MCF 10A (cell line): ENCODE measurements at regions of chr7 and their contacts with region 1.

Region 1: DNA sequence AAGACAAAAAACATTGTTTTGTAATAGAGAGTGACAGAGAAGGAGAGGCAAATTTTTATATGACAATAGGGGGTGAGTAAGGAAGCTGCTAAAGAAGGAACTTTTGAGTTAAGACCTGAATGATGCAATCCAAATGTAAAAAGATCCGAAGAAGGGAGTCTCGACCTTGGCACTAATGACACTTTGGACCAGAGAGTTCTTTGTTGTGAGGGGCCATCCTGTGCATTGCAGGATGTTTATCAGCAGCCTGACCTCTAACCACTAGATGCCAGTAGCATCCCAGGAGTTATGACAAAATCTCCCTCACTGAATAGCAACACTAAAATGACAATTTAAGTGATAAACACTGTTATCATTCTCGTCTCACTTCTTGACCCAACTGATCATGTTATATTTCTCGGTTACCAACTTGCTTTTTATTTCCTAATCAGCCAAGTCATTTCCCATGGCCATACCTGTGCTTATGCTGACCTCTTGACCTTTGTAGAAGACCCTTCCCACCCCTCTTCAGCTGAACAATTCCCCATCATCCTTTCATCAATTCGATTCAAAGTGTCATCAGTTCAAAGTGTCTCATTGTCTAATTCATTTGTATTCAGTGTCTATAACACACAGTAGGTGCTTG is 30.0 kb downstream of the DGKI start:
- DNase-seq: peak; percentile 17
- H3K4me3 Mint-ChIP-seq: no peak overlapping the region
- H3K27ac Mint-ChIP-seq: no peak overlapping the region
- H3K4me1 Mint-ChIP-seq: no peaks in the 10 kb centered on the region
- H3K27me3 Mint-ChIP-seq: no peaks in the 10 kb centered on the region
- CTCF ChIP-seq: no peak

Region 2: DNA sequence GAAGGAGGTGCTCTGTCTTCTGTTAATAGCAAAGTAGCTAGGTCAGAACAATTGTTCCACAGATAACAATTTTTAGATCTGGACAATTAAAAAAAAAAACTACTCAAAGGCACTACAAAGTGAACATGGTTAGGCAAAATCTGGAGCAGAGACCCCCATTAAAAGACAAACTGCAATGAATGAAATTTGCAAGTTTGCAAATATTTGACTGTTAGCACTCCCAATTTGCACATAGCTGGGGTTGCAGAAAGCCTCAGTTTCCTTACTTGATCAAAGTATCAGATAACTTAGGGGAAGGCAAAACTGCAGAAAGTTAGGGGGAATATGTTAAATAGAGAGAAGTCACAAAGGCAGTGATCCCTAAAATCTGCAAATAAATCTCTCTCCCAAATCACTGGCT is 38.3 kb before region 1 on chr7:
- CTCF ChIA-PET with region 1: no interaction called
- POLR2A ChIA-PET with region 1: no interaction called
- intact Hi-C with region 1: no loop called
- DNase-seq: no peak
- H3K4me3 Mint-ChIP-seq: no peak overlapping the region
- H3K27ac Mint-ChIP-seq: no peak overlapping the region
- H3K4me1 Mint-ChIP-seq: peaks cover 10% of the 10 kb centered on the region
- H3K27me3 Mint-ChIP-seq: no peaks in the 10 kb centered on the region
- CTCF ChIP-seq: no peak

Region 3: DNA sequence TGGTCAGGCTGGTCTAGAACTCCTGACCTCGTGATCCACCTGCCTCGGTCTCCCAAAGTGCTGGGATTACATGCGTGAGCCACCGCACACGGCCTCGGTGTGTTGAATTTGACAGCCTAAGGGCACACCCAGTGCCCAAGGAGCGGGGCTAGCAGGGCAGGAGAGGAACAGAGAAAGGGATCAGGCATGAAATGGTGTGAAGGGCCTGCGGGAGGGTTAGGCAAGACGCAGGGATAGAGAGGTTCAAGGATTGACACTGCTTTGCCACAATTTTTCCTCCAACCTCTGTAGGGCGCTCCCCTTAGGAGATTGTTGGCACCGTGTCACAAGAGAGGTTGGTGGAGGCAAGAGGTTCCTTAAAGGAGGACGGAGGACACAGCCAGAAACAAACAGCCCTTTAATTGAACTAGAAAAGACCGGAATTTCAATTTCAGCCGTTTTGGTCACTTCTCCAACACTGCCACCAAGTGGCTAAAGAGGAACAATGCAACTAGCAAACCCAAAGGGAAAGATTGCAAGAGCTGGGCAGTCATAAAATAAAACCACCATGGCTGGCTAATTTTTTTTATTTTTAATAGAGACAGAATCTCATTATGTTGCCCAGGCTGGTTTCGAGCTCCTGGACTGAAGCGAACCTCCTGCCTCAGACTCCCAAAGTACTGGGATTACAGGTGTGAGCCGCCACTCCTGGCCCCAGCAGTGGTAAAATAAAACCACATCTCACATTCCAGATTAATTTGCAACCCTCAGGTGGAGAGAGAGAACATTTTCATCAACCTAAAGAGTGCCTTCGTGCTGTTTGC is 191.9 kb after region 1 on chr7:
- CTCF ChIA-PET with region 1: interaction called, 3 read pairs
- POLR2A ChIA-PET with region 1: no interaction called
- intact Hi-C with region 1: loop called (anchors 2 kb)
- DNase-seq: peak; percentile 78
- H3K4me3 Mint-ChIP-seq: no peak overlapping the region
- H3K27ac Mint-ChIP-seq: no peak overlapping the region
- H3K4me1 Mint-ChIP-seq: no peaks in the 10 kb centered on the region
- H3K27me3 Mint-ChIP-seq: no peaks in the 10 kb centered on the region
- CTCF ChIP-seq: peak; percentile 90